Activated CD4-positive, alpha-beta memory T cell treated with anti-CD3 and anti-CD28 coated beads for 36 hours (primary cell): ENCODE measurements at regions of chr16 and their contacts with region 1.

Region 1: DNA sequence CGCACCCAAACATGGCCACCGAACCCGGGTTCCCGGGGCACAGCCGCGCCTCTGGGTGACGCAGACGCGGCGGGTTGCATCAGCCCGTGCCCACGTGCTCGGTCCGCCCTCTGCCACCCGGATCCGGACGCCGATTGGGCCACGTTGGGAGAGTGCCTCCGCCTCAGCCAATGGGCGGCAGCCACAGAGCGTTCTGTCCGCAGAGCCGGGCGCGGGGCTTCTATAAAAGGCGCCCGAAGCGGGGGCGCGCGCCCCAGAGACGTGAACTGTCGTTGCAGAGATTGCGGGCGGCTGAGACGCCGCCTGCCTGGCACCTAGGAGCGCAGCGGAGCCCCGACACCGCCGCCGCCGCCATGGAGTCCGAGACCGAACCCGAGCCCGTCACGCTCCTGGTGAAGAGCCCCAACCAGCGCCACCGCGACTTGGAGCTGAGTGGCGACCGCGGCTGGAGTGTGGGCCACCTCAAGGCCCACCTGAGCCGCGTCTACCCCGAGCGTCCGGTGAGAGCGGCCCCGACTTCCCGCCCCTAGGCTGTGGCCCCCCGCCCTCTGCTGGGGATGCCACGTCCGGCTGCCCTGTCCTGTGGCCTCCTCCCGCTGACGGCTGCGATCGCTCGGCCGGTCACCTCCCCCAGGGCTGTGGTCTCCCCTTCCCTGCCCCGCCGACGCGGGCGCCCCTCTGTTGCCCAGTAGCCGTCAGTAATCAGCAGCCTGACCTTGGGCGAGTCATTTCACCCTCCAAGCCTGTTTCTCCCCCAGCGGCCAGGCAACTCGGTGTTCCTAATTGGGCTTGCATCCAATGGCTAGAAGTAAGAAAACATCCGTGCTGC is at the start of gene HERPUD1:
- DNase-seq: peak; percentile 100
- H3K4me3 Mint-ChIP-seq: peak within 1 kb of the TSS; percentile 98
- H3K27ac Mint-ChIP-seq: peak within 1 kb of the TSS; percentile 98
- H3K4me1 Mint-ChIP-seq: peaks cover 36% of the 10 kb centered on the region
- H3K27me3 Mint-ChIP-seq: no peaks in the 10 kb centered on the region
- total RNA-seq, gene HERPUD1: 159 TPM

Region 2: DNA sequence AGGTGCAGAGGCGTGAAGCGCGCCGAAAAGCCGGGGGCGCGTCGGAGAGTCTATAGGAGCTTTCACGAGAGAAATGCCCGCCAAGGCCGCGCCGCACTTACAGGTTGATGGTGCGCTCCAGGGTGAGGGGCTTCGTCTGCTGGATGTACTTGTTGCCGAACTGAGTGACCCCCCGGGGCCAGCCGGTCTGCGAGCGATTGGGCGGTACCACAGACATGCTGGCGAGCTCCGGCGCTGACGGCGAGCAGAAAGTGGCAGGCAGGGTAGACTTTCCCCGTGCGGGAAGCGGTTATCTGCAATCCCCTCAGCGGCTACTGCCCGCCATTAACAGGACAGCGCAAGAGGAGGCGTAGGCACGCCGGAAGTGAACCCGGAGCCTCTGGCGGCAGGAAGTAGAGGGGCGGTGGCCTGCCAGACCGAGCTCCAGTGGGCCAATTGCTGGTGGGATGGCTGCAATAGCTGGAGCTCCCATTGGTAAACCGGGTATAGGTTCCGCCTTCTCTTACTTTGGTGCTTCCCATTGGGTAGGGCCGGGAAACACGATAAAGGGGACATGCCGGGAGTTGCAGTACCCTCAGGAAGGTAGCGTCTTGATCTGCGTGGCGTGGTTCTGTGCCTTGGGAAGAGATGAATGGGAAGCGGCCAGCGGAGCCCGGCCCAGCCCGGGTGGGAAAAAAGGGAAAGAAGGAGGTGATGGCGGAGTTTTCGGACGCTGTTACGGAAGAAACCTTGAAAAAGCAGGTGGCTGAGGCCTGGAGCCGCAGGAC is 480.9 kb before region 1 on chr16 and contains the starts of genes NUDT21 and OGFOD1:
- CTCF ChIA-PET with region 1: no interaction called
- POLR2A ChIA-PET with region 1: no interaction called
- intact Hi-C with region 1: loop called (anchors 5 kb)
- DNase-seq: peak; percentile 95
- H3K4me3 Mint-ChIP-seq: peak within 1 kb of the TSS; percentile 95
- H3K27ac Mint-ChIP-seq: peak within 1 kb of the TSS; percentile 89
- H3K4me1 Mint-ChIP-seq: peaks cover 56% of the 10 kb centered on the region
- H3K27me3 Mint-ChIP-seq: no peaks in the 10 kb centered on the region
- total RNA-seq, gene NUDT21: 352 to 361 TPM
- total RNA-seq, gene OGFOD1: 63.0 to 66.4 TPM

Region 3: GRCh38 chr16:56477096-56477878 is 454.8 kb before region 1 on chr16:
- CTCF ChIA-PET with region 1: no interaction called
- POLR2A ChIA-PET with region 1: no interaction called
- intact Hi-C with region 1: no loop called
- DNase-seq: peak; percentile 35
- H3K4me3 Mint-ChIP-seq: no peak overlapping the region
- H3K27ac Mint-ChIP-seq: peak overlapping the region; percentile 77
- H3K4me1 Mint-ChIP-seq: peaks cover 19% of the 10 kb centered on the region
- H3K27me3 Mint-ChIP-seq: no peaks in the 10 kb centered on the region

Region 4: GRCh38 chr16:56667581-56668571 is 264.2 kb before region 1 on chr16 and contains the start of gene MT1G:
- CTCF ChIA-PET with region 1: no interaction called
- POLR2A ChIA-PET with region 1: no interaction called
- intact Hi-C with region 1: no loop called
- DNase-seq: peak; percentile 37
- H3K4me3 Mint-ChIP-seq: no peak within 1 kb of the TSS
- H3K27ac Mint-ChIP-seq: no peak within 1 kb of the TSS
- H3K4me1 Mint-ChIP-seq: peaks cover 21% of the 10 kb centered on the region
- H3K27me3 Mint-ChIP-seq: peaks cover 42% of the 10 kb centered on the region
- total RNA-seq, gene MT1G: 5.0 to 5.8 TPM

Region 5: DNA sequence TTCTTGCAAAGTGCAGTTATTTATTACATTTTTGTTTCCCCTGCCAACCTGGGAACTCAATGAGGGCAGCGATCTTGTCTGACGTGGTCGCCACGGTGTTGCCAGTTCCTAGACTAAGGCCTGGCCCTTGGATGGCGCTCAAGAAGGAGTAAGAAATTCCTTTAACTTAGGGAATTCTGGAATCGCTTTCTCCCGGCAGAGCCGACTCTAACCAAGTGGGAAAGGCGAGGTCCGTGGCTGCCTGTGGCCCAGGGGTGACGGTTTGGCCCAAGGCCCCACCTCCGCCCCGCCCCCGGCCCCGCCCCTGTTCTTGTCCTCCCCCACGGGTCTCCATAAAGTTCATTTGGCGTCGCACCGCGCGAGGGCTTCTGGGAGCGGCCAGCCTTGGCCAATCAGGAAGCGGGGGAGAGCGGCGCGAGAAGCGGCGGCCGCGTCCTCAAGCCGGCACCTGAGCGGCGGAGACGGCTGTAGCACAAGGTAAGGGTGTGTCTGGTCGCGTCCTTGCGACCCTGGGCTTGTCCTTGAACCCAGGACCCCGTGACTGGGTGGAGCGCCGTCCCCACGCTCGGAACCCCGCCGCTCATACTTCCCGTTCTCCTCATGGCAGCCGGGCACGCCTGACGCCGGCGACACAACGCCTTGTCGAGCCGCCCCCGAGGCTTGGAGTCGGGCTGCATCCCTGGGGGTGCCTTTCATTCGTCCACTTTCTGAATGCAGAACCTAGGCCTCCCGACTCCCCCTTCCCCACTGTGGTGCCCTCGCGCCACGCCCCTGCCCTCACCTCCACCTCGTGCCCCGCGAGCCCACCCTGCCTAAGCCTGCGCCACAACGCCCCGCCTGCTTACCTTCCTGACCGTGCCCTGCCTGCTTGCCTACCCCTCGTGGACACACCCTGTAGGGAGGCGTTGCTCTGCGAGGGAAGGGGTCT is 202.1 kb before region 1 on chr16 and contains the start of gene NUP93:
- CTCF ChIA-PET with region 1: no interaction called
- POLR2A ChIA-PET with region 1: no interaction called
- intact Hi-C with region 1: loop called (anchors 5 kb)
- DNase-seq: peak; percentile 94
- H3K4me3 Mint-ChIP-seq: peak within 1 kb of the TSS; percentile 88
- H3K27ac Mint-ChIP-seq: peak within 1 kb of the TSS; percentile 51
- H3K4me1 Mint-ChIP-seq: peaks cover 16% of the 10 kb centered on the region
- H3K27me3 Mint-ChIP-seq: no peaks in the 10 kb centered on the region
- total RNA-seq, gene NUP93: 131 to 133 TPM

Region 6: DNA sequence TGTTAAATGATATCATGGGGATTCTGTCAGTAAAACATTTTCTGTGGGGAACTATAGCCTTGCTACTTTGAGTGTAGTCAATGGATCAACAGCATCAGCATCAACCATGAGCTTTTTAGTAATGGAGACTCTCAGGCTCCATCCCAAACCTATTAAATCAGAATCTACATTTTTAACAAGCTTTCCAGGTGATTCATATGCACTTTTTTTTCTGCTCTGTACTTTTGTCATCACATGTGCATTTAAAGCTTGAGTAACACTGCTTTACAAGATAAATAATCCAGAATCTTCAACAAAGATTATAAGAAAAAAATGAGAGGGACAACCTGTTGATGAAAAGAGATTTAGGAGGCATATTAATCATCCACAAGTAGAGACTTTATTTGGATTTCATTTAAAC is 178.7 kb before region 1 on chr16:
- CTCF ChIA-PET with region 1: no interaction called
- POLR2A ChIA-PET with region 1: no interaction called
- intact Hi-C with region 1: no loop called
- DNase-seq: no peak
- H3K4me3 Mint-ChIP-seq: no peak overlapping the region
- H3K27ac Mint-ChIP-seq: no peak overlapping the region
- H3K4me1 Mint-ChIP-seq: peaks cover 9% of the 10 kb centered on the region
- H3K27me3 Mint-ChIP-seq: no peaks in the 10 kb centered on the region

Region 7: GRCh38 chr16:56866943-56867830 is 64.9 kb before region 1 on chr16:
- CTCF ChIA-PET with region 1: interaction called, 11 read pairs
- POLR2A ChIA-PET with region 1: interaction called, 4 read pairs
- intact Hi-C with region 1: no loop called
- DNase-seq: peak; percentile 48
- H3K4me3 Mint-ChIP-seq: no peak overlapping the region
- H3K27ac Mint-ChIP-seq: no peak overlapping the region
- H3K4me1 Mint-ChIP-seq: peaks cover 10% of the 10 kb centered on the region
- H3K27me3 Mint-ChIP-seq: no peaks in the 10 kb centered on the region

Region 8: GRCh38 chr16:56911771-56912571 is 20.1 kb before region 1 on chr16:
- CTCF ChIA-PET with region 1: interaction called, 3 read pairs
- POLR2A ChIA-PET with region 1: interaction called, 54 read pairs
- intact Hi-C with region 1: loop called (anchors 1 kb)
- DNase-seq: no peak
- H3K4me3 Mint-ChIP-seq: no peak overlapping the region
- H3K27ac Mint-ChIP-seq: no peak overlapping the region
- H3K4me1 Mint-ChIP-seq: peaks cover 33% of the 10 kb centered on the region
- H3K27me3 Mint-ChIP-seq: no peaks in the 10 kb centered on the region

Region 9: GRCh38 chr16:56944954-56945839 is 13.1 kb after region 1 on chr16:
- CTCF ChIA-PET with region 1: interaction called, 4 read pairs
- POLR2A ChIA-PET with region 1: interaction called, 49 read pairs
- intact Hi-C with region 1: loop called (anchors 1 kb)
- DNase-seq: peak; percentile 60
- H3K4me3 Mint-ChIP-seq: no peak overlapping the region
- H3K27ac Mint-ChIP-seq: peak overlapping the region; percentile 94
- H3K4me1 Mint-ChIP-seq: peaks cover 55% of the 10 kb centered on the region
- H3K27me3 Mint-ChIP-seq: no peaks in the 10 kb centered on the region

Region 10: DNA sequence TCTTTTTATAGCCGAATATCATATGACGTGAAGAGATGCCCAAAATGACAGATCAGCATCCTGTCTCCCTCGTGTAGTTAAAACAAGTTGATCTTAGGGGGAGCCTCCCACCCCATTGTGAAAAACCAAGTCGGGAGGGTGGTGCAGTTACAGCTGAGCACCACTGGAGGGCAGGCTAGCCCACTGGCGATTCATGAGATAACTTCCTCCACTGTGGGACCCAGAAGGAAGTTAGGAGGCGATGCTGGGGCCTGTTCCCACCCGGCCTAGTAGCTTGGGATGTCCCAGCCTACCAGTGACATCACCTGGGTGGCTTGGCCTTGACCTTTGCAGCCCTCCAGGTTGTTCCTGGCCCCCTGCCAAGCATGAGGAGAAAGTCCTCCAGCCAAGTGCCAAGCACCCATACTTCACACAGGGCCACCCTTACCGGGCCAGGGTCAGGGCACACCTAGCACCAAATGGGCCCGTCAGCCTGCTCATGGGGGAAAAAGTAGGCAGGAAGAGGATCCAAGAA is 152.2 kb after region 1 on chr16:
- CTCF ChIA-PET with region 1: no interaction called
- POLR2A ChIA-PET with region 1: no interaction called
- intact Hi-C with region 1: no loop called
- DNase-seq: peak; percentile 85
- H3K4me3 Mint-ChIP-seq: no peak overlapping the region
- H3K27ac Mint-ChIP-seq: no peak overlapping the region
- H3K4me1 Mint-ChIP-seq: peaks cover 6% of the 10 kb centered on the region
- H3K27me3 Mint-ChIP-seq: no peaks in the 10 kb centered on the region